Esophagus muscularis mucosa (tissue), 4 donors: ENCODE measurements at regions of chr17 and their contacts with region 1.

Region 1: GRCh38 chr17:77963441-77963840 is 4.9 kb downstream of the TNRC6C start:
- DNase-seq: peak; percentile 66
- H3K4me3 ChIP-seq: no peak overlapping the region
- H3K27ac ChIP-seq: peak overlapping the region; percentile 10 to 96 (median 50)
- H3K4me1 ChIP-seq: peaks cover 50 to 86% (median 78%) of the 10 kb centered on the region in 4 donors
- H3K27me3 ChIP-seq: no peaks in the 10 kb centered on the region
- CTCF ChIP-seq: no peak
- EP300 ChIP-seq: no peak
- POLR2A ChIP-seq: no peak

Region 2: GRCh38 chr17:77999413-78000173 is 36.2 kb after region 1 on chr17:
- intact Hi-C with region 1: loop called (anchors 5 kb)
- DNase-seq: no peak
- H3K4me3 ChIP-seq: no peak overlapping the region
- H3K27ac ChIP-seq: peak overlapping the region; percentile 7 to 49 (median 12)
- H3K4me1 ChIP-seq: peaks cover 47 to 86% (median 64%) of the 10 kb centered on the region in 4 donors
- H3K27me3 ChIP-seq: no peaks in the 10 kb centered on the region
- CTCF ChIP-seq: no peak
- EP300 ChIP-seq: no peak
- POLR2A ChIP-seq: no peak